ENCODE measurements at regions of chr1 and their contacts with region 1.

Region 1: GRCh38 chr1:169106095-169106920 is at the start of gene ATP1B1:
- DNase-seq: peak; percentile 96
- H3K4me3 Mint-ChIP-seq: peak within 1 kb of the TSS; percentile 85
- H3K27ac Mint-ChIP-seq: peak within 1 kb of the TSS; percentile 85
- H3K4me1 Mint-ChIP-seq: peaks cover 47% of the 10 kb centered on the region
- H3K27me3 Mint-ChIP-seq: peaks cover 19% of the 10 kb centered on the region
- total RNA-seq, gene ATP1B1: 12.5 and 15.3 TPM in 2 replicates

Region 2: GRCh38 chr1:167553136-167554027 is 1552.9 kb before region 1 on chr1 and contains the start of gene CREG1:
- intact Hi-C with region 1: loop called (anchors 5 kb)
- DNase-seq: peak; percentile 98
- H3K4me3 Mint-ChIP-seq: peak within 1 kb of the TSS; percentile 88
- H3K27ac Mint-ChIP-seq: no peak within 1 kb of the TSS
- H3K4me1 Mint-ChIP-seq: peaks cover 26% of the 10 kb centered on the region
- H3K27me3 Mint-ChIP-seq: peaks cover 6% of the 10 kb centered on the region
- total RNA-seq, gene CREG1: 12.3 and 13.6 TPM in 2 replicates

Region 3: DNA sequence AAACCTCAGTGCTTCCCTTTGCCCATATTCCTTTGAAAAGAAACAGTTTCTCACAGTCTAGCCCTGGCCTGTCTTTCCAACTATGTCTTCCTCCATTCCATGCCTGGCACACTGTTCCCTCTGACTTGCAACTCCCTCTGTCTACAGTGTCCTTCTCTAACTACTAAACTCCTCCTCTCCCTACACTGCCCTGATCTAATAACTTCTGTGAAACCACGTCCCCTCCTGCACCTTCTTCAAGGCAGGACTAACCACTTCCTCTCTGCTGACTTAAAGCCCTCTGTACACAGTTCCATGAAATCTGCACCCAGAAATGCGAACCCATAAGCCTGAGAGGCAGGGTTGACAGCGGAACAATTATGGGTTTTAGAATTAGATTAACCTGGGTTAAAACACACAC is 62.0 kb before region 1 on chr1:
- intact Hi-C with region 1: loop called (anchors 2 kb)
- DNase-seq: peak; percentile 87
- H3K4me3 Mint-ChIP-seq: peak overlapping the region; percentile 70
- H3K27ac Mint-ChIP-seq: peak overlapping the region; percentile 83
- H3K4me1 Mint-ChIP-seq: peaks cover 65% of the 10 kb centered on the region
- H3K27me3 Mint-ChIP-seq: no peaks in the 10 kb centered on the region

Region 4: DNA sequence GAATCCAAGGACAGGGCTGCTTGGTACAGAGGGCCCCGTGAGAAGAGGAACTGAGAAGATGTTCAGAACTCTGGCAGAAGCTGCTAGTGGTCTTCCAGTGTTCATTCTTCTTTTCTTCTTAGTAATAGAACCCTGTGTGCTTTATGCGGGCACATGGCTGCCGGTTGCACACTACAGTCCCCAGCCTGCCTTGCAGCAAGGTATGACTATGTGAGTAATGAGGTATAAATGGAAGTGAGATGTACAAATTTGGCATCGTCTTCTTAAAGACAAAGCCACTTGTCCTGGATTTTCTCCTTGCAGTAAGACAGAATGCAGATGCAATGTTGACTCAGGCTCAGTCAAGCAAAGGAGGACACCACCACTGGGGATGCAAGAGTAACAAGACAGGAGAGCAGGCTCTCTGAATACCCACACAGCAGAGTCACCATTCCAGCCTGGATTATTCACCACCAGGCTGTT is 14.8 kb before region 1 on chr1:
- intact Hi-C with region 1: loop called (anchors 2 kb)
- DNase-seq: no peak
- H3K4me3 Mint-ChIP-seq: no peak overlapping the region
- H3K27ac Mint-ChIP-seq: no peak overlapping the region
- H3K4me1 Mint-ChIP-seq: peaks cover 9% of the 10 kb centered on the region
- H3K27me3 Mint-ChIP-seq: peaks cover 7% of the 10 kb centered on the region

Region 5: DNA sequence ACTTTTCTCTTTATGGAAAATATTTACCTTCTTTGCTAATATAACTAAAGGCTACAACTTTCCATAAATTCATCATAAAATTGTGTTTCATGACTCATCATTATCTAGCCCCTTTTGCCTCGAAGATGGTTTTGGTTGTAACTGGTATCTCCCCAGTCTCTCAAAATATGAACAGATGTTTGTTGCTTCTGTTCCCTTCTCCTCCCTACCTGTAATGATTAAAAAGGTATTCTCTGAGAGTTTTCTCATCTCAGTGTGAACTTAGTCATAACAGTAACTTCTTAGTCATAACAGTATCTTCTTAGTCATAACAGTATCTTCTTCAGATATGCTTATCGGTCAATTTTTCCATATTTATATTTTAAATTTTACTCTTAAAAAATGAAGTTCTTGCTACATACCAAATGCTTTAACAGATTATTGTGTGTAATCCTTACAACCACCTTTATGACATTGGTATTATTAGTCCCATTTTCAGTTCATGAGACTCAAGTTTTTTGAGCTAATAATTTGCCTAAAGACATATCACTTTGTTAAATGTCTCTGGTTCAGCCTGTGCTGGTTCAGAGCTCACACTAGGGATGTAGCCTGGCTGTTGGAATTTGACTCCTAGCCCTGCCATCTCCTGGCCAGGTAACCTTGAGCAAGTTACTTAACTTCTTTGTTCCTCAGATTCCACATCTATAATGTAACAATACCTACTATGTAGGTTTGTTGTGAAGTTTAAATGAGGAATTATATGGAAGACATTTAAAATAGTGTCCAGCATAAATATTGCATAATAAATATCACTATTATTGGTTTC is 32.8 kb after region 1 on chr1:
- intact Hi-C with region 1: loop called (anchors 2 kb)
- DNase-seq: no peak
- H3K4me3 Mint-ChIP-seq: peak overlapping the region; percentile 8
- H3K27ac Mint-ChIP-seq: peak overlapping the region; percentile 81
- H3K4me1 Mint-ChIP-seq: peaks cover 15% of the 10 kb centered on the region
- H3K27me3 Mint-ChIP-seq: no peaks in the 10 kb centered on the region

Region 6: DNA sequence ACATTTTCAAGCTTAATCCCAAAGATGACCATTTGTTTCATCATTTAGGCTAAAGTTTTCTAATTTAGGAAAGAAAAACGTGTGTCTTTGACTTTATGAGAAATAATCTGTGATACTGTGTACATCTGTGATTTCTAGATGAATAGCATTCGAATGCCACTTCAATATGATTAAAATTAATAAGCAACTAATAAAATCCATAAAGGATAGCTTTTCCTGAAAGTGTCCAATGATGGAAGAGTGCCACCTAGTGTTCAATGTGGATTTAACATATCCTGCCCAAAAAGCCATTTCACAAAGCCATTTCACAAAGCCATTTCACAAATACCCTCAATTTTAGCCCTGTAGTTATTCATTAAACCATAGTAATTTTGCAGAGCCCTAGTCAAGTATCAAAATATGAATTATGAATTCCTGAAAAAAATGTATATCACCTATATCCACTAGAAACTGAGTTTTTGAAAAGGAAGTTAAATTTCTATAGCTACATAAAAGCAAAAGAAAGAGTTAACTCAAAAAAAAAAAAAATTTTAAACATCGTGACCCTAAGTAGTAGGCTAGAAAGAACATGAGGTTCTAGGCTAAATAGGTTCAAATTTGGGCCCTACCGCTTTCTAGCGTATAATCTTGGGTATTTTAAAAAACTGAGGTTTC is 242.2 kb after region 1 on chr1:
- intact Hi-C with region 1: loop called (anchors 5 kb)
- DNase-seq: peak; percentile 80
- H3K4me3 Mint-ChIP-seq: no peak overlapping the region
- H3K27ac Mint-ChIP-seq: no peak overlapping the region
- H3K4me1 Mint-ChIP-seq: peaks cover 11% of the 10 kb centered on the region
- H3K27me3 Mint-ChIP-seq: no peaks in the 10 kb centered on the region

Region 7: DNA sequence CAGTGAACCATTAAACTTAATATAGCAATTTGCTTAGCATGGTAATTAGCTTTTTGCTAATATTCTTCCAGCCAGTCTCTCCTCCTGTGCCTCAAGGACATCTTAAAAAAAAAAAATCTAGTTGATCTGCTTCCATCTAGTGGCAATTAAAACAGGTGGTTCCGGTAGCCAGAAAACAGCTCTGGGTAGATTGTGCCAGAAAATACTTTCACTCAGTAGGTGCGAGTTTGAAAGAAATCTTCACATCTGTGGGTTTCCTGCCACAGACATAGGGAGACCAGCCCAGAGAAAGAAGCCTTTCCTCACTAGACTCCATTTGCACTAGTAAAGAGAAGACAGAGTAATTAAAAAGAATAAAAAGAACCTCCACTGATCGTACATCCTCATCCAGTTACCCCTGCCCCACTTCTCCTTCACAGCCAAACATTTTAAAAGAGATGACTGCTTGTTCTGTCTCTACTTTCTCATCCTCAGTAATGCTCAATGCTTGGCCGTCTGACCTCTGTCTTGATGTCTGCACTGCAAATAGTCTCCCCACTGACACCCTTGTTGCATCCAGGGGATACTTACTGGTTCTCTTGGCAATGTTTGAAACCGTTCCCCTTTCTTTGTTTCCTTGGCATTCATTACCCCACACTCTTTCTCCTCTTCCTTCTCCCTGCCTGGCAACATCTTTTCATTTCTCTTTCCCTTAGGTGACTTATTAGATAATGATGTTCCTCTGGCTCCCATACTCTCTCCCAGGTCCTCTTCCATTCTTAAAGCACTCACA is 588.2 kb after region 1 on chr1:
- intact Hi-C with region 1: loop called (anchors 10 kb)
- DNase-seq: peak; percentile 88
- H3K4me3 Mint-ChIP-seq: peak overlapping the region; percentile 26
- H3K27ac Mint-ChIP-seq: peak overlapping the region; percentile 79
- H3K4me1 Mint-ChIP-seq: peaks cover 84% of the 10 kb centered on the region
- H3K27me3 Mint-ChIP-seq: no peaks in the 10 kb centered on the region

Measured in activated CD4-positive, alpha-beta T cell treated with anti-CD3 and anti-CD28 coated beads, Interleukin-2, amount 10 ng/mL, durations not matched to agents 24 days and 14 days (primary cell).